ENCODE measurements at regions of chr17 and their contacts with region 1.

Region 1: GRCh38 chr17:21252796-21253645 is at the start of gene NATD1:
- DNase-seq: peak; percentile 73
- H3K4me3 ChIP-seq: peak within 1 kb of the TSS; percentile 53 to 62 (median 56)
- H3K27ac ChIP-seq: peak within 1 kb of the TSS; percentile 30
- H3K4me1 ChIP-seq: peaks cover 26% of the 10 kb centered on the region
- H3K27me3 ChIP-seq: no peaks in the 10 kb centered on the region
- CTCF ChIP-seq: no peak
- total RNA-seq, gene NATD1: 6.1 to 10.8 TPM

Region 2: DNA sequence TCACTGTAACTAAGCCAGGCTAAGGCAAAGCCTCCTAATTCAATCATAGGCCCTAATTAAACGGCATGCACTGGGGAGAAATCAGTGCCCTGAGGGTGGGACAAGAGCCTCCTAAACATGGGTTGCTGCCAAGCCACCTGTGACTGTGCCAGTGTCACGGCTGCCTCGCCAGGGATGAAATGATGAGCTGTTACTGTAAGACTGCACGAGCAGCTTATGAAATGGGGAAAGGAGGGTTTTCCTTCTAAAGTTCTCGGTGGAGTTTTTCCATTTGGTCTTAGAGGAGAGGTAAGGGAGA is 51.8 kb before region 1 on chr17:
- CTCF ChIA-PET with region 1: no interaction called
- dilution Hi-C with region 1: loop called (anchors 5 kb)
- in situ Hi-C with region 1: no loop called
- intact Hi-C with region 1: no loop called
- DNase-seq: no peak
- H3K4me3 ChIP-seq: no peak overlapping the region
- H3K27ac ChIP-seq: peak overlapping the region; percentile 32
- H3K4me1 ChIP-seq: peaks cover 31% of the 10 kb centered on the region
- H3K27me3 ChIP-seq: no peaks in the 10 kb centered on the region
- CTCF ChIP-seq: no peak

Region 3: DNA sequence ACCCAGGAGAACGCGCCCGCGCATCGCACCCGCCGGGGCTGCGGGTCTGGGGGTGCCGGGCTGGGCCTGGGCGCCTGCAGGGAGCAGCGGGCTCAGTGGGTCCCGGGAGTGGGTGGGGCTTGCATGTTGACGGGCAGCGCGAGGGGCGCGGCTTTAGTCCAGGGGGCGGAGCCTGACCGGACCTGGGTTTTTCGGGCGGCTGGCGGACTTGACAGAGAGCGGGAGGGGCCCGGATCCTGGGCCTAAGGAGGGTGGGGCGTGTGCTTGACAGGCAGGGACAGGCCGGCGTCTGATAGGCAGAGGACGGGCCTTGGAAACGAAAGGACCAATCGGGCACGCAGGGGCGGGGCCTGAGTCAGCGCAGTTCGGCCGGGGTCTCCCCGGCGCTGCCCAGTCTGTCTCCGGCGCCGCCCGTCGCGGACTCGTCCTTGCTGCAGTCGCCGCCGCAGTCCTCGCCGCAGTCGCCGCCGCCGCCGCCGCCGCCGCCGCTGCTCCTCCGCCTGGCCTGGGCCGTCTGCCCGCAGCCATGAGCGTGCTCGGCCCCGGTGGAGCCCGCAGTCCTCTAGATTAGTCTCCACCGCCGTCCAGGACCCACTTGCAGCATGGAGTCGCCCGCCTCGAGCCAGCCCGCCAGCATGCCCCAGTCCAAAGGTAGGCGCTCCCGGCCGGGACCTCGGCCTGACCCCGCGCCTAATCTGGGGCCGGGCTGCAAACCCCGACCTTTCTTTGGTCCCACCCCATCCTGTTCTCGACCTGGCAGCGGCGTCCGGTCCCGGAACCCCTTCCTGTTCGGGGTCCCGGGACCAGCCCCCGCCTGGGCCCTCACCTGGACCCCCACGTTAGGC is 31.5 kb after region 1 on chr17 and contains the start of gene MAP2K3:
- CTCF ChIA-PET with region 1: no interaction called
- dilution Hi-C with region 1: loop called (anchors 5 kb)
- in situ Hi-C with region 1: no loop called
- intact Hi-C with region 1: no loop called
- DNase-seq: peak; percentile 97
- H3K4me3 ChIP-seq: peak within 1 kb of the TSS; percentile 71 to 87 (median 76)
- H3K27ac ChIP-seq: peak within 1 kb of the TSS; percentile 97
- H3K4me1 ChIP-seq: peaks cover 45% of the 10 kb centered on the region
- H3K27me3 ChIP-seq: no peaks in the 10 kb centered on the region
- CTCF ChIP-seq: no peak
- total RNA-seq, gene MAP2K3: 14.2 to 57.6 TPM

Region 4: DNA sequence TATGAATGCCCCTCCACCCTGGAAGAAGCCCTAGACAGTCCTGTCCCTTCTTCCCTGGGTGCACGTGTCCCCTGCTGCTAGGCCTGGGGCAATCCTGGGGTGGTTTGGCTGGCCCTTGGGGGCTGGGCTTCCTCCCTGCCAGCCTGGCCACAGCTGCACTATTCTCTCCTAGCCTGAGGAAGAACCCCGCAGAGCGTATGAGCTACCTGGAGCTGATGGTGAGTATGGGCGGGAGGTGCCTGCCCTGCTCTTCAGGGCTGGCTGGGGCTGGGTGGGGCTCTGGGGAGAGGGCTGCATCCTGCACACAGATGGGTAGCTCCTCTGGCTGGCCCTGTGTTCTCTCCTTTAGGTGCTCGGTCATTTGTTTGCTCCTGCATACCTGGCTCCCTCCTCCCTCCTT is 60.3 kb after region 1 on chr17:
- CTCF ChIA-PET with region 1: no interaction called
- dilution Hi-C with region 1: no loop called
- in situ Hi-C with region 1: no loop called
- intact Hi-C with region 1: no loop called
- DNase-seq: no peak
- H3K4me3 ChIP-seq: no peak overlapping the region
- H3K27ac ChIP-seq: no peak overlapping the region
- H3K4me1 ChIP-seq: no peaks in the 10 kb centered on the region
- H3K27me3 ChIP-seq: no peaks in the 10 kb centered on the region
- CTCF ChIP-seq: no peak

Region 5: DNA sequence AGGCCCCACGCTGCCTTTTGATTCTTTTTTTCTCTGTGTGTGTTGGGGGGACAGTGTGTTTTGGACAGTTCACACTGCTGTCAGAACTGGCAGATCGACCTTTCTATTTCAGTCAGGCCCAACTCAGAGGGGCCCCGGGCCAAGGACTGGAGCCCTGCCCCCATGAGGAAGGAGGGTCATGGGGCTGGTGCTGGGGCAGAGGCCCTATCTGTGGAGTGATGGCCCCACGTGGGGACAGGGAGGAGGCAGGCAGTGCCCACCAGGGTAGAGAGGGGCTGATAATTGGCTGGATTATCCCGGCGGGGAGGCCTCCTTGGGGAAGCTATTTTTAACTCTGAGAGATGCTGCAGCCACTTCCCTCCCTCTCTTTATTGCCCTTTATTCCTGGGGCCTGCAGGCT is 117.4 kb after region 1 on chr17:
- CTCF ChIA-PET with region 1: no interaction called
- dilution Hi-C with region 1: no loop called
- in situ Hi-C with region 1: loop called in 1 of 2 experiments (anchors 25 kb)
- intact Hi-C with region 1: no loop called
- DNase-seq: no peak
- H3K4me3 ChIP-seq: no peak overlapping the region
- H3K27ac ChIP-seq: no peak overlapping the region
- H3K4me1 ChIP-seq: no peaks in the 10 kb centered on the region
- H3K27me3 ChIP-seq: peaks cover 3% of the 10 kb centered on the region
- CTCF ChIP-seq: no peak

Measured in mammary epithelial cell (primary cell).